ENCODE measurements at regions of chr6 and their contacts with region 1.

Region 1: DNA sequence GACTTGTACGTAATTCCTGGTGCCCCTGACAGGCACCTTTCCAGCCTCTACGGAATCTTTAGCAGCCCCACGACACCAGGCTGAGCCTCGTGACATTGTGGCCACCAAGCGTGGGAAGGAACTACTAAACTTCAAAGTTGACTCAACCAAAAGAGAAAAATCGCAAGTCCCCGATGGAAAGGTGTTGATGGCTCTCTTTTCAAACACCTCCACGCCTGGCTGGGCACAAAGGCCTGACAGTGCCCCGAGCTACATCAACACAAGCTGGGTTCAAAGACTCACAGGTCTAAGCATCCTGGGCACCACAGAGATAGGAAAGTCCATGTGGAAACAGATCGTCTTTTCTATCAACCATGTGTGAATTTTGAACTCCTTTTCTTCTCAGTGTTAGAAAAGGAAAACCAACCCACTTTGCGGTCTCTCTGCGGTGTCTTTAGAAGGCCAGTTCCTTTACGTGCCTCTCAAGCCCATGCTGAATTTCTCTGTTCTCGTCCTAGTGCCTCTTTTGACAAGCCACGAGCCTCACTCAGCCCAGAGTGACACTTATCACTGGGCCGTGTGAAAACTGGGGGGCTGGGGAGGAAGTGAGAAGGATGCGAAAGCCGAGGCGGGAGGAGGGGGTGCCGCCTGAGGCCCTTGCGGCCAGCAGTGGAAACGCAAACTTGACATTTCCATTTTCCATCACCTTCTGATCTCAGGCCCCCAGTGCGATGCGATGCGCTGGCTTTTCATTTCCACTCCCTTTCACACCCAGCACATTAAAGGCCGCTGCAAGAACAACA is 59.4 kb downstream of the GFOD1 start:
- DNase-seq: peak; percentile 82
- CTCF ChIP-seq: peak; percentile 31

Region 2: GRCh38 chr6:13063300-13063918 is 364.6 kb before region 1 on chr6:
- CTCF ChIA-PET with region 1: no interaction called
- POLR2A ChIA-PET with region 1: no interaction called
- DNase-seq: no peak
- CTCF ChIP-seq: no peak

Region 3: DNA sequence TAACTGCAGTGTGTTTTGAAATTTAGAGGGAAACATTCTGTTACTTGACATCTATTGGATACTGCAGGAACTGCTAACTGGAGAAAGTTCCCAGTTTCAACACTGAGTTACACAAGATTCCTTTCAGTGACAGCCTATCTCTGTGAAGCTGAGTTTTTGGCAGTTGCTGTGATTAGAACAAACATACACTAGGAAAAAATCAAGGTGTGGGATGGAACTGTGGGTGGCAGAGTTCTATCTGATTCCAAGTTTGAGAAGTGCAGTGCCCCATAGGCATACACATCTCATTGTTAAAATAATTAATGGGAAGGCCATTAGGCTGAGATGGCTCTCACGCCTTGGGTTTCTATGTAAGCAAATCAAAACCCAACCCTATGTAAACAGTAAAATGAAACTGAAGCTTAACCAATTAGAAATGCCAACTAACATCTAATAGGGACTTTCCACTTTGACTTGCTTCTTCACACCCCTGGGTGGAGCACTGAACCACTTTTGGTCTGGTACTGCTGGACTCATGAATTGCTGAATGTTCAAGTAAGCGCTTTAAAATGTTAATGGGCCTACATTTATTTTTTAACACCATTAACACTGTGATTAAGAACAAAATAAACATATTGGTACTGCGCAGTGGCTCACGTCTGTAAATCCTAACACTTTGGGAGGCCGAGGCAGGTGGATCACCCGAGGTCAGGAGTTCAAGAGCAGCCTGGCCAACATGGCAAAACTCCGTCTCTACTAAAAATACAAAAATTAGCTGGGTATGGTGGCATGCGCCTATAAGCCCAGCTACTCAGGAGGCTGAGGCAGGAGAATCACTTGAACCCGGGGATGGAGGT is 44.4 kb before region 1 on chr6:
- CTCF ChIA-PET with region 1: interaction called, 18 read pairs
- POLR2A ChIA-PET with region 1: no interaction called
- DNase-seq: peak; percentile 67
- CTCF ChIP-seq: peak; percentile 25

Region 4: DNA sequence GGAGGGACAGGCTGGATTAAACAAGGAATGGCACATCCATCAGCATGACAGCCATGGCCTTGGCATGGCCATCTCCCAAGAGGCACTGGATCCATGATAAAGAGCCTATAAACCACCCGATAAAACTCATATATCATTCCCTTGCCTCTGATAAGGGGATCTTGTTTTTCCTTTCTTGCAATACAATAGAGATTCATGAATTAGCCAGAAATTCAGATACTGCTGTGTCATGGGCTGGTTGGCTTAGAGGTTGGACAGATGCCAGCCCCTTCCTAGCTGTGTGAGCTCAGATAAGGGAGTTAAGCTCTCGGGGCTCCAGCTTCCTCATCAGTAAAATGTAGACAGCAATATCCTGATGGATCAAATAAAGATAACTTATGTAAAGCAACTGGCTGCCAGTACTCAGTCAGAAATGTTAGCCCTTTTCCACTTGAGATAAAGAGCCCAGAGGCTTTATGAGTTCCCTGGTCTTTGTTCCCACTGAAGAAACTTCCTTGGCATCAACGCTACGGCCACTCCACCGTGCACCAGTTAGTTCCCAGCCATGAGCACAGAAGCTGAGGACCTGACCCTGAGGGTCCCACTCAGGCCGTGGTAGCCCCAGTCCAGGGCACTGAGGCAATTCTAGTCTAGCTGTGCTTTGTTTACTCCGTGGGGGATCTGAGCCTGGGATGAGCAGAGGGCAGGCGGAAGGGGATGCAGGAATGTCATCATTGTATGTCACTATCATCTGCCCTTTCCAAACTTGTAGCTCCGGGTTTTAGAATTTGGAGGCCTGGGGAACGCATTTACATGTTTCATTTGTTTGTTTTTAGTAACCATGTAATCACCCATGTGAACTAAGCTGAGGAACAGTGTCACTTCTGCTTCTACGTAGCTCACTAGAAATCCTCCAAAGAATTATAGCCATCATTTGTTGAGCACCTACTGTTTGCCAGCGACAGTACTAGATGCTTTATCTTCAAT is 32.4 kb before region 1 on chr6:
- CTCF ChIA-PET with region 1: interaction called, 90 read pairs
- POLR2A ChIA-PET with region 1: interaction called, 12 read pairs
- DNase-seq: peak; percentile 62
- CTCF ChIP-seq: no peak

Region 5: DNA sequence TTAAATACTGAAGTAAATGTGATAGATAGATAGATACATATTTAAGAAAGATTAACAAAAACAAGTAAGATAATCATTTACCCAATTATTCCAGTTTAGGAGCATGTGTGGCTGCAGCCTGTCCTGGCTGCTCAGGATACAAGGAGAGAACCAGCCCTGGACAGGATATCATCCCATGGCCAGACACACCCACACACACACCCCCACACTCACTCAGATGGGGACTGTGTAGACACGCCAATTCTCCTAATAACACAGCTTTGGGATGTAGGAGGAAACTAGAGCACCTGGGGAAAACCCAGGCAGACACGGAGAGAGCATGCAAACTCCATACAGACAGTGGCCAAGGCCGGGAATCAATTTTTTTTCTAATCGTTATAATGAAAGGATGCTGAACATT is 13.8 kb after region 1 on chr6:
- CTCF ChIA-PET with region 1: interaction called, 12 read pairs
- POLR2A ChIA-PET with region 1: no interaction called
- DNase-seq: no peak
- CTCF ChIP-seq: no peak

Region 6: DNA sequence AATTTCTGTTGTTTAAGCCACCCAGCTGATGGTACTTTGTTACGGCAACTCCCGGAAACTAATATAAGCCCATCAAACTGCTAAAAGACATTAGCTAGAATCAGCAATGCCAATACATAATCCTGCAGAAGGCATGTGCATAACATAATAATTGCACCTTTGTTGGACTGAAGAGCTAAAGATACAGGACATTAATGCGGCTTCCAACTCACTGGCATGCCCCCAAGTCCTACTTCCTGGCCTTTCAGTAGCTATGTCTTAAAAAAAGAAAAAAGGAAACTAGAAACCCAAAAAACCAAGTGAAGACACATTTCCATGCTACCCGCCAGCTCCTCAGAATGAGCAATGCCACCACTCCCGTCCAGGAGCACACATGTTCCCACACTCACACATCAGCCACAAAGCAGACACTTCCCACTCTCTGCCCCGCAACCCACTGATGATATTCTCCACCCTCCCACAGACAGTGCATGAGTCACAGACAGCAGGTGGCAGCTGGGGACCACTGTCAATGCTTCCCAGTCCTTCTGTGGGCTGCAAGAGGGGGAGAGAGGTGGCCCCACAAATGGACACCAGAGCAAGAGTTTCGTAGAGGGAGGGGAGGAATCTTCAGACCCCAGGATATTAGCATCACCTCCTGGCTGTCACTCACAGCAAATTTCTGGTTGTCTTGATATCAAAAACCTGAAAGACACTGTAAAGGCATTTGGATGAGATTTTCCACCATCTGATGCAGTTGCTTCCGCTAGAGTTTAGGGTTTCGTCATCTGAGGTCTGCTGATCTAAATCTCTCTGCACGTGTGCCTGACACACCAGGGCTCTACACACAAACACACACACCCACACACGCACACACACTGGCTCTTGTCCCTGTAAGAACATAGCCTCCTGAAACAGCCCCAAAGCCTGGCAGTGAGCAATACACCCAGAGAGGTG is 26.6 kb after region 1 on chr6:
- CTCF ChIA-PET with region 1: interaction called, 31 read pairs
- POLR2A ChIA-PET with region 1: interaction called, 3 read pairs
- DNase-seq: no peak
- CTCF ChIP-seq: peak; percentile 50

Region 7: DNA sequence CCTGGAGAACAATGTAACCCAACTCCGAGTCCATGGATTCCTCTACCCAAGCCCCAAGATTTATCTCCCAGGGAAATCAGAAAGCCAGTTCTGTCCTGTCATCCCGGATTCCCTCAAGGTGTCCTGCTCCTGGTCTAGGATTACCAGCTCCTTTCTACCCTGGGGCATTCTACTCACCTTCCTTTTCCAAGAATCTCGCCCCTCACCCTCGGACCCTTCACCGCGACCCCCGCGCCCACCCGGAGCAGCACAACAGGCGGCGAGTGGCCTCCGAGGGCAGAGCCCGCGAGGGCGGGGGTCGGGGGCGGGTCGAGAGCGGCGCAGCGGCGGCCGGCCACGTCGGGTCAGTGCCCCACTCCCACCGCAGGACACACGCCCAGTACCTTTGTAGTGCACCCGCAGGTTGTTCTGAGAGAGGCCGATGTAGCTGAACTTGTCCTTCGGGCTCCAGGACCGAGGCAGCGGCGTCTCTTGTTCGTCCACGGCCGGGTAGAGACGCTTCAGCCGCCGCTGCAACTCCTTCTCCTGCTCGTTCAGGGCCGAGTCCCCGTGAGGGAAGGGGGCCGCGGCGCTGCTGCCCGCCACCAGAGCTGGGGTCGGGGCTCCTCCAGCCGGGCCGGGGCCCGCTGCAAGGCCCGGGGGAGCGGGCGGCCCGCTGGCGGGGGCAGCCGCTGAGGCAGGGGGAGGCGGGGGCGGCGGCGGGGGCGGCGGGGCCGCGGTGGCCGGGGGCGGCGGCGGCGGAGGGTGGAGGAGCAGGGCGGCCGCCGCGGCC is 282.7 kb after region 1 on chr6:
- CTCF ChIA-PET with region 1: no interaction called
- POLR2A ChIA-PET with region 1: no interaction called
- DNase-seq: peak; percentile 47
- CTCF ChIP-seq: no peak